ENCODE measurements at regions of chr12 and their contacts with region 1.

Region 1: DNA sequence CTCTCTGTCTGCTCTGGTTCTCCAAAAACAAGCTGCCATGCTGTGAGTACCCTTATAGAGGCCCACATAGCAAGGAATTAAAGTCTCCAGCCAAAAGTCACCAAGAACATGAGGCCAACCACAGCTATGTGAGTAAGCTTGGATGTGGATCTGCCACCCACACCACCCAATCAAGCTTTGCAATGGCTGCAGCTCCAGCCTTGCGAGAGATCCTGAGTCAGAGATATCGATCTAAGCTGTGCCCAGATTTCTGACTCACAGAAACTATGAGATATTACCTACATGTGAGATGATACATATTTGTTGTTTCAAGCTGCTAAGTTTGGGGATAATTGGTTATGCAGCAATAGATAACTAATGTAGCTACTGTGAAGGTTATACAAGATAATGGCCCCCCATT is 15.5 kb upstream of the TMEM233 start:
- DNase-seq: no peak
- H3K4me3 Mint-ChIP-seq: no peak overlapping the region
- H3K27ac Mint-ChIP-seq: no peak overlapping the region
- H3K4me1 Mint-ChIP-seq: peaks cover 5% of the 10 kb centered on the region
- H3K27me3 Mint-ChIP-seq: peaks cover 15% of the 10 kb centered on the region

Region 2: GRCh38 chr12:119667577-119668323 is 89.6 kb after region 1 on chr12 and contains the start of gene PRKAB1:
- intact Hi-C with region 1: loop called (anchors 1 kb)
- DNase-seq: peak; percentile 96
- H3K4me3 Mint-ChIP-seq: peak within 1 kb of the TSS; percentile 90
- H3K27ac Mint-ChIP-seq: peak within 1 kb of the TSS; percentile 84
- H3K4me1 Mint-ChIP-seq: peaks cover 49% of the 10 kb centered on the region
- H3K27me3 Mint-ChIP-seq: no peaks in the 10 kb centered on the region
- total RNA-seq, gene PRKAB1: 26.8 and 28.2 TPM in 2 replicates

Measured in activated T-helper 2 cell treated with anti-CD3 and anti-CD28 coated beads, Interferon-gamma antibody, Interleukin-2, Interleukin-4, amounts not matched to agents 10 μg/mL and 5 μg/mL and 100 μg/mL, durations not matched to agents 14 hours and 24 hours and 36 hours (primary cell).